ENCODE measurements at regions of chr4 and their contacts with region 1.

Region 1: GRCh38 chr4:60840020-60840419 is 360.1 kb upstream of the ADGRL3 start:
- DNase-seq: no peak
- H3K4me3 ChIP-seq: no peak overlapping the region
- H3K27ac ChIP-seq: no peak overlapping the region
- H3K4me1 ChIP-seq: no peaks in the 10 kb centered on the region
- H3K27me3 ChIP-seq: no peaks in the 10 kb centered on the region
- CTCF ChIP-seq: no peak
- EP300 ChIP-seq: no peak
- POLR2A ChIP-seq: no peak

Region 2: GRCh38 chr4:60485279-60485678 is 354.7 kb before region 1 on chr4:
- in situ Hi-C with region 1: no loop called
- intact Hi-C with region 1: loop called (anchors 5 kb)
- DNase-seq: no peak
- H3K4me3 ChIP-seq: no peak overlapping the region
- H3K27ac ChIP-seq: no peak overlapping the region
- H3K4me1 ChIP-seq: no peaks in the 10 kb centered on the region
- H3K27me3 ChIP-seq: no peaks in the 10 kb centered on the region
- CTCF ChIP-seq: no peak
- EP300 ChIP-seq: no peak
- POLR2A ChIP-seq: no peak

Region 3: DNA sequence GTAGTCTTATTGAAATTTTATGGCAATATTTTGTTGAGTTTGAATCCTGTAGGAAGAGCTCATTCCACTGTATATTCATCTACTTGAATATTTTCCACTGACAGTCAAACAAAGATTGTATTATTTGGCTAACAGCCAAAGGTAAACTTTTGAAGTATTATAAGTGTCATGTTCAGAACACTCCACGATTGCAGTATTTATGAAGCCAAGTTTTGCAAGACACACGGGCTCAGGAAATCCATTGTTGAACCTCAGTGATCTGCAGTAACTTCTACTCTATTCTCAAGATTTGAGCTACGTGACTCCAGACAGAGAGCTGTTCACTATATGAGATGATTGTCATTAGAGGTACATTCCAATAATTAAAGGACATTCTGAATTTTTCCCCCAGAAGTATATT is 57.4 kb after region 1 on chr4:
- in situ Hi-C with region 1: no loop called
- intact Hi-C with region 1: no loop called
- DNase-seq: no peak
- H3K4me3 ChIP-seq: no peak overlapping the region
- H3K27ac ChIP-seq: no peak overlapping the region
- H3K4me1 ChIP-seq: no peaks in the 10 kb centered on the region
- H3K27me3 ChIP-seq: no peaks in the 10 kb centered on the region
- CTCF ChIP-seq: no peak
- EP300 ChIP-seq: no peak
- POLR2A ChIP-seq: no peak

Measured in transverse colon (tissue), 4 donors.